ENCODE measurements at regions of chr1 and their contacts with region 1.

Region 1: GRCh38 chr1:20696397-20697329 is 21.1 kb downstream of the KIF17 start:
- DNase-seq: peak; percentile 76 to 78
- ATAC-seq: peak; percentile 84 to 86
- H3K4me3 ChIP-seq: peak overlapping the region; percentile 66 to 91 (median 68)
- H3K27ac ChIP-seq: peak overlapping the region; percentile 81 to 89 (median 86)
- H3K4me1 ChIP-seq: peaks cover 6 to 12% of the 10 kb centered on the region in 2 donors
- H3K27me3 ChIP-seq: no peaks in the 10 kb centered on the region
- CTCF ChIP-seq: peak; percentile 75 to 98 (median 93)
- POLR2A ChIP-seq: no peak

Region 2: DNA sequence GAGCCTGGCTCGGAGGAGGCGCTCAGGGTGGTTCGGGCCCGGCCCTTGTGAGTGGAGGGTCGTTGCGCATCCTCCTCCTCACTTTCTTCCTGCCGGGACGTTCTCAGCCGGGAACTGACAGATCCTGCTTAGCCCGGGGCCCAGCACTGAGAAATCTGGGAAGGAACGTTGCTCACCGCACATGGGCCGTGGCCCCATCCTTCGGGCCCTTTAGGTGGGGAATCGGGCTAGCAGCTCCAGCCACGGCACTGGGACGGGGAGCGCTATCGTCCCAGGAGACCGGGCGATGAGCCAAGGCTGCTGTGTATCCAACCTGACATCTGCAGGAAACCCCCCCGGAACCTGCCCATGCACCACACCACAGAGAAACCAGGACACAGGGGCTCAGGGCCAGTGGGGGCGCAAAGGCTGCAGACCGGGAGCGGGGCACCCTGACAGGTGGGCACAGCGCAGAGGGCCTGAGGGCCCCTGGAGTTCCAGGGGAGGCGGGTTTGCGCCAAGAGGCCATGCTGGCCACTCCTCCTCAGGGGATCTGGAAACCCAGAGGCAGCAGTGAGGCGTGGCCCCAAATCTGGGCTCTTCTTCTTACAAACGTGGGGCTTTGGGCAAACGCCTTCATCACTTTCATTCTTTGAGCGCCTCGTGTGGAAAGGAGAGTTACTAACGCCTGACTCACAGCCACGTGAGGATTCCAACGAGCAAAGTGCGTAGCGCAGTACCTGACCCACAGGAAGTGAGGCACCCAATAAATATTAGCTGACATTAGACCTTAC is 36.1 kb after region 1 on chr1 and contains the start of gene SH2D5:
- in situ Hi-C with region 1: no loop called
- intact Hi-C with region 1: loop called (anchors 1 kb)
- DNase-seq: peak; percentile 64 to 77
- ATAC-seq: peak; percentile 85 to 87
- H3K4me3 ChIP-seq: peak within 1 kb of the TSS; percentile 55 to 62 (median 58)
- H3K27ac ChIP-seq: peak within 1 kb of the TSS in 3 of 4 donors; percentile 26 to 59 (median 52)
- H3K4me1 ChIP-seq: peaks cover 8 to 15% of the 10 kb centered on the region in 2 donors
- H3K27me3 ChIP-seq: peaks cover 0 to 13% (median 7%) of the 10 kb centered on the region in 3 donors
- CTCF ChIP-seq: peak in 4 of 5 experiments; percentile 17 to 42 (median 24)
- POLR2A ChIP-seq: no peak
- total RNA-seq, gene SH2D5: 0.53 TPM in 1 of 4 donors, not detected in the others

Region 3: DNA sequence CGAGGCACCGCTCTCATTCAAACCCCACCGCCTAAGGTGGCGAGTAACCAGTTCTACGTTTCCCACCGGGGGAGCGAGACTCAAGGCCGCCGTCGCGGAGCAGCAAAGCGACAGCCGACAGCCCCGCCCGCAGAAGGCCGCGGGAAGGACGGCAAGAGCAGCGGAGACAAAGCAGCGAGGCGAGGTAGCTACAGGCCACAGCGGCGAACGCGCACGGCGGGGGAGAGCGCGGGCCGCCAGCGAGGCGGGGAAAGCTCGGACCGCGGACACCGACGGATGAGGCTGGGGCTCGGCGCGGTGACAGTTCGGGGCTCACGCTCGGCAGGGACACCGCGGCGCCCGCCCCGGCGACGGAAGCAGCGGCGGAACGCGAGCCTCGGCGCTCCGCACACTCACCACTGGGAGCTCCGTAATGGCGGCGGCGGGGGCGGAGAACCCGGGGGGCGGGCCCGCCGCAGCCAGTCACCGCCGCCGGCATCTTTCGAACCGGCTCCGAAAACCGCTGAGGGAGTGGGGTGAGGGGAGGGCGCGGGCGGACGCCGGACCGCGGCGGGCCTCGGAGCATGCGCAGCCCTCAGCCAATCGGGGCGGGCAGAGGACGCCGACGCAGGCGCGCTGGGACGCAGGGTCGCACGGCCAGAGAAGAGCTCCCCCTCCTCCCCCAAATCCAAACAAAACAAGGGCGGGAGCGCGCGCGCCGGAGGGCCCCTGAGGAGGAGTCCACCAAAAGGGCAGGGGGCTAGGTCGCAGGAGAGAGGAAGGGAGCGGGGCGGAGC is 89.8 kb after region 1 on chr1:
- in situ Hi-C with region 1: no loop called
- intact Hi-C with region 1: loop called (anchors 1 kb)
- DNase-seq: peak; percentile 93
- ATAC-seq: peak; percentile 84 to 89
- H3K4me3 ChIP-seq: peak overlapping the region; percentile 76 to 93 (median 86)
- H3K27ac ChIP-seq: peak overlapping the region; percentile 95 to 98 (median 98)
- H3K4me1 ChIP-seq: peaks cover 32 to 43% of the 10 kb centered on the region in 2 donors
- H3K27me3 ChIP-seq: no peaks in the 10 kb centered on the region
- CTCF ChIP-seq: no peak
- POLR2A ChIP-seq: peak; percentile 72 to 94

Region 4: GRCh38 chr1:20992322-20993056 is 295.8 kb after region 1 on chr1:
- in situ Hi-C with region 1: no loop called
- intact Hi-C with region 1: loop called (anchors 5 kb)
- DNase-seq: no peak
- ATAC-seq: peak; percentile 87 to 92
- H3K4me3 ChIP-seq: peak overlapping the region in 1 of 4 donors; percentile 31
- H3K27ac ChIP-seq: peak overlapping the region; percentile 63 to 83 (median 82)
- H3K4me1 ChIP-seq: peaks cover 42 to 46% of the 10 kb centered on the region in 2 donors
- H3K27me3 ChIP-seq: no peaks in the 10 kb centered on the region
- CTCF ChIP-seq: no peak
- POLR2A ChIP-seq: no peak

Region 5: GRCh38 chr1:21189906-21190500 is 493.3 kb after region 1 on chr1:
- in situ Hi-C with region 1: loop called (anchors 5 to 10 kb)
- intact Hi-C with region 1: loop called (anchors 1 kb)
- DNase-seq: no peak
- ATAC-seq: no peak
- H3K4me3 ChIP-seq: no peak overlapping the region
- H3K27ac ChIP-seq: no peak overlapping the region
- H3K4me1 ChIP-seq: peaks cover 13 to 23% of the 10 kb centered on the region in 2 donors
- H3K27me3 ChIP-seq: no peaks in the 10 kb centered on the region
- CTCF ChIP-seq: no peak
- POLR2A ChIP-seq: no peak

Region 6: DNA sequence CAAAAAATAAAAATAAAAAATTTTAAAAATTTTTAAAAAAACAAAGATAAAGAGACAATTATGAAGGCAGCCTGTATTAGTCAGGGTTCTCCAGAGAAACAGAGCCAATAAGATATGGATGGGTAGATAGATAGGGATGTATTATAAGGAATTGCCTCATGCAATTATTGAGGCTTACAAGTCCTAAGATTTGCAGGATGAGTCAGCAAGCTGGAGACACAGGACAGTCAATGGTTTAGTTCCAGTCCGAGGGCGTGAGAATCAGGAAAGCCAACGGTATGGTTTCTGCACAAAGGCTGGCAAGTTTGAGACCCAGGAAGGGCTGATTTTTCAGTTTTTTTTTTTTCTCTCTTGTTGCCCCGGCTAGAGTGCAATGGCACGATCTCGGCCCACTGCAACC is 504.1 kb after region 1 on chr1:
- in situ Hi-C with region 1: loop called in 3 of 4 experiments (anchors 10 kb)
- intact Hi-C with region 1: loop called (anchors 1 kb)
- DNase-seq: no peak
- ATAC-seq: no peak
- H3K4me3 ChIP-seq: no peak overlapping the region
- H3K27ac ChIP-seq: no peak overlapping the region
- H3K4me1 ChIP-seq: no peaks in the 10 kb centered on the region
- H3K27me3 ChIP-seq: no peaks in the 10 kb centered on the region
- CTCF ChIP-seq: no peak
- POLR2A ChIP-seq: no peak

Region 7: DNA sequence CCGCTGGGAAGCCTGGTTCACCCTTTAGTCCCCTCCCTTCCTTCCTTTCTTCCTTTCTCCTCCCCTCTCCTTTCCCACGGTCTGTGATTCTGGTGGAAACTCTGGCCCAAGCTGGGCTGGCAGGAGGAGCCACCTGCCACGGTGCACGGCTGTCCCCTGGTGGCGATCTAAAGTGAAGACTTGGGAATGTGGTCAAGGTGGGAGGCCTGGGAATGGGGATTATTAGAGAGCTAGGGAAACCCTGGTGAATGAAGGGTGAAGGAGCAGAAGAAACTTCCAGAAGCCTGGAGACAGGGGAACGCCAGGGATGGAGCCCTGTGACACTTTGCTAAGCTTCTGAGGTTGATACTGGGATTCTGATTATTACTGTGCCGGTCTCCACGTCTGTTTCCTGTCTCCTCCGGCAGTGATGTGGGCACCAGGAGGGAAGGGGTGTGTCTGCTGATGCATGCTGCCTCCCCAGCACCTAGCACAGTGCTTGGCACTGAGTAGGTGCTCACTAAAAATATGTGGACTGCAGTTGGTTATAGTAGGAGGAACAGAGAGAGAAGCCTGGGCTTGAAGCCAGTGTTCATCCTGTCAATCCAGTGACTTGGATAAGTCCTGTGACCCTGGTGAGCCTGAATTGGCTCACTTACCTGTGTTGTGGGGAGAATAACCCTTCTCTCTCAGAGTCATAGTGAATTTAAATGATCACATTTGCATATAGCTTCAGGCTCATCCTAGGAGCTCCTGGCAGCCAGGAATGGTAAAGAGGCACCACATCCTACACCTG is 672.0 kb after region 1 on chr1:
- in situ Hi-C with region 1: loop called in 2 of 4 experiments (anchors 25 kb)
- intact Hi-C with region 1: no loop called
- DNase-seq: peak; percentile 47 to 59
- ATAC-seq: peak; percentile 76 to 81
- H3K4me3 ChIP-seq: no peak overlapping the region
- H3K27ac ChIP-seq: no peak overlapping the region
- H3K4me1 ChIP-seq: no peaks in the 10 kb centered on the region
- H3K27me3 ChIP-seq: no peaks in the 10 kb centered on the region
- CTCF ChIP-seq: peak; percentile 98 to 99 (median 98)
- POLR2A ChIP-seq: no peak

Measured in gastrocnemius medialis (tissue), 4 donors.